H1 (cell line): ENCODE measurements at regions of chr12 and their contacts with region 1.

Region 1: GRCh38 chr12:111024205-111024801 is 103.9 kb upstream of the MYL2 start:
- DNase-seq: peak in 1 of 2 experiments; percentile 90
- H3K4me3 ChIP-seq: no peak overlapping the region
- H3K27ac ChIP-seq: no peak overlapping the region
- H3K4me1 ChIP-seq: no peaks in the 10 kb centered on the region; a peak in 2 of 7 replicates
- H3K27me3 ChIP-seq: peaks cover 0 to 2% (median 0%) of the 10 kb centered on the region in 4 experiments; a peak in 3 of 7 replicates
- CTCF ChIP-seq: peak; percentile 83 to 97 (median 93)
- EP300 ChIP-seq: no peak
- POLR2A ChIP-seq: no peak
- RAD21 ChIP-seq: peak; percentile 95 to 97

Region 2: GRCh38 chr12:110998165-110998564 is 26.1 kb before region 1 on chr12:
- CTCF ChIA-PET with region 1: interaction called, 46 read pairs
- POLR2A ChIA-PET with region 1: interaction called, 3 read pairs
- DNase-seq: no peak
- H3K4me3 ChIP-seq: no peak overlapping the region
- H3K27ac ChIP-seq: no peak overlapping the region
- H3K4me1 ChIP-seq: no peaks in the 10 kb centered on the region
- H3K27me3 ChIP-seq: no peaks in the 10 kb centered on the region
- CTCF ChIP-seq: no peak
- EP300 ChIP-seq: no peak
- POLR2A ChIP-seq: no peak
- RAD21 ChIP-seq: no peak